Heart right ventricle (tissue), 16 donors: ENCODE measurements at regions of chrX and their contacts with region 1.

Region 1: GRCh38 chrX:23782863-23783568 is at the start of gene SAT1:
- DNase-seq: peak; percentile 94 to 96
- ATAC-seq: peak; percentile 94 to 97 (median 96)
- H3K4me3 ChIP-seq: peak within 1 kb of the TSS; percentile 57 to 86 (median 78)
- H3K27ac ChIP-seq: peak within 1 kb of the TSS; percentile 83 to 97 (median 94)
- H3K4me1 ChIP-seq: peaks cover 0 to 32% (median 6%) of the 10 kb centered on the region in 9 donors
- H3K27me3 ChIP-seq: no peaks in the 10 kb centered on the region
- CTCF ChIP-seq: peak; percentile 65 to 86 (median 79)
- total RNA-seq, gene SAT1: 73.5 to 273 (median 102) TPM

Region 2: DNA sequence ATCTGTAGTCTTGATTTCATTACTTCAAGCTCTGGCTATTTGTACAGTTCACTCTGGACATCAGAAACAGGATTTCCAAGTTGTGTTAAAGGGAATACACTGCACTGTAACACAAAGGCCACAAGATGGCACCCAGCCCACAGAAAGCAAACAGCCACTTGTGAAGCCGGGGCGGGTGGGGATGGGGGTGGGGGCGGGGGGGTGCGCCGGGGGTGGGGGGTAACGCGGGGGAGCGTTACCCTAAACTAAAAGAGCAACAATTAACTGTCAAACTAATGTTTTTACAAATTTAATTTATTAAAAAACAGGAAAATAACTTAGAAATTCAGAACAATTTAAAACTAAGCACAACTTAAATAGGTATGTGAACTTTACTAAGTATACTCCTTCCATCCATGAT is 88.4 kb before region 1 on chrX:
- intact Hi-C with region 1: loop called in 1 of 10 experiments (anchors 5 kb)
- DNase-seq: peak in 1 of 2 donors; percentile 49
- ATAC-seq: peak in 3 of 8 donors; percentile 48 to 58 (median 53)
- H3K4me3 ChIP-seq: no peak overlapping the region
- H3K27ac ChIP-seq: no peak overlapping the region
- H3K4me1 ChIP-seq: peaks cover 0 to 3% (median 0%) of the 10 kb centered on the region in 9 donors
- H3K27me3 ChIP-seq: peaks cover 0 to 7% (median 0%) of the 10 kb centered on the region in 7 donors
- CTCF ChIP-seq: peak; percentile 16 to 66 (median 52)

Region 3: GRCh38 chrX:23854945-23855344 is 71.9 kb after region 1 on chrX:
- intact Hi-C with region 1: loop called in 1 of 10 experiments (anchors 10 kb)
- DNase-seq: no peak
- ATAC-seq: no peak
- H3K4me3 ChIP-seq: no peak overlapping the region
- H3K27ac ChIP-seq: no peak overlapping the region
- H3K4me1 ChIP-seq: no peaks in the 10 kb centered on the region
- H3K27me3 ChIP-seq: peaks cover 0 to 11% (median 0%) of the 10 kb centered on the region in 7 donors
- CTCF ChIP-seq: no peak

Region 4: GRCh38 chrX:23907498-23908218 is 124.6 kb after region 1 on chrX and contains the starts of genes APOO and CXorf58:
- intact Hi-C with region 1: loop called in 7 of 10 experiments (anchors 1 to 10 kb)
- DNase-seq: peak; percentile 89 to 91
- ATAC-seq: peak; percentile 96 to 99 (median 98)
- H3K4me3 ChIP-seq: peak within 1 kb of the TSS; percentile 50 to 75 (median 65)
- H3K27ac ChIP-seq: peak within 1 kb of the TSS; percentile 78 to 95 (median 88)
- H3K4me1 ChIP-seq: peaks cover 0 to 16% (median 2%) of the 10 kb centered on the region in 9 donors
- H3K27me3 ChIP-seq: peaks cover 0 to 26% (median 0%) of the 10 kb centered on the region in 7 donors
- CTCF ChIP-seq: peak; percentile 49 to 89 (median 74)
- total RNA-seq, gene APOO: 73.5 to 132 (median 103) TPM
- total RNA-seq, gene CXorf58: 0.13 to 1.1 (median 0.33) TPM in 8 of 10 donors, not detected in the others

Region 5: DNA sequence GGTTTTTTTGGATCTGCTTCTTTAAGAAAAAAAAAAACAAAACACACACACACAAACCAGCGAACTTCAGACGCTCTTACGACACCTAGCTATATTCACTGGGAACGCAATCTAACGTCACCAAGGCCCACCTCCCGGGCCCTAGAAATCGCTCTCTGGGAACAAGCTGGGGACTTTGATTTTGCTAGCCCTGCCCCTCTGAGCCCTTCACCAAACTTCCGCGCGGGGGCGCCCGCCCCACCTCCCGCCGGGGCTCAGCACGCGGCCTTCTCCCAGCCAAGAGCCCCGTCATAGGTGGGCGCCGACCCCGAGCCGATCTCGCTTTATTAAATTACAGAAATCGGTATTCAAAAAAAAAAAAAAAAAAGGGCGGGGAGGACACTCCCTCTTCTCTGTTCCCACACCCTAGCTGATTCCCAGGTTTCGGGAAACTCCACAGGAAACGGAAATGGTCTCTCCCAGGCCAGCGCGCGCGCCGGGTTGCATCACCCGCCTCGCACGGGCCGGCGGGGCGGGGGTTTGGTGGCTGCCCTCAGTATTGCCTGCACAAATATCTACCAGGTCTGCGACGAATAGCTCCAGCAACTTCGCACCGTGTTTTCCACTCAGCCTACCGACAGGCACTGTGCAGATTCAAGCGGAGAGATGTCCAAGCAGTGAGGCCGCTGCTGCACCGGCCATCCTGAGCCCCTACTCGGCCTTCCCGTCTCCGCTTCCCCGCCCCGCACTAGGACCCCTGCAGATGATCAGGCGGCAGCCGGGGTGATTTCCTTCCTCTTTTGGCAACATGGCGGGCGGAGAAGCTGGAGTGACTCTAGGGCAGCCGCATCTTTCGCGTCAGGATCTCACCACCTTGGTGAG is 271.4 kb after region 1 on chrX and contains the start of gene EIF2S3:
- intact Hi-C with region 1: loop called in 1 of 10 experiments (anchors 5 kb)
- DNase-seq: peak; percentile 80 to 88
- ATAC-seq: peak; percentile 96 to 99 (median 98)
- H3K4me3 ChIP-seq: peak within 1 kb of the TSS in 4 of 10 donors; percentile 77 to 89 (median 84)
- H3K27ac ChIP-seq: peak within 1 kb of the TSS; percentile 83 to 96 (median 92)
- H3K4me1 ChIP-seq: peaks cover 0 to 11% (median 0%) of the 10 kb centered on the region in 9 donors
- H3K27me3 ChIP-seq: peaks cover 0 to 24% (median 0%) of the 10 kb centered on the region in 7 donors
- CTCF ChIP-seq: peak; percentile 35 to 83 (median 74)
- total RNA-seq, gene EIF2S3: 68.7 to 104 (median 80.6) TPM